Caco-2 (cell line): ENCODE measurements at regions of chr3 and their contacts with region 1.

Region 1: DNA sequence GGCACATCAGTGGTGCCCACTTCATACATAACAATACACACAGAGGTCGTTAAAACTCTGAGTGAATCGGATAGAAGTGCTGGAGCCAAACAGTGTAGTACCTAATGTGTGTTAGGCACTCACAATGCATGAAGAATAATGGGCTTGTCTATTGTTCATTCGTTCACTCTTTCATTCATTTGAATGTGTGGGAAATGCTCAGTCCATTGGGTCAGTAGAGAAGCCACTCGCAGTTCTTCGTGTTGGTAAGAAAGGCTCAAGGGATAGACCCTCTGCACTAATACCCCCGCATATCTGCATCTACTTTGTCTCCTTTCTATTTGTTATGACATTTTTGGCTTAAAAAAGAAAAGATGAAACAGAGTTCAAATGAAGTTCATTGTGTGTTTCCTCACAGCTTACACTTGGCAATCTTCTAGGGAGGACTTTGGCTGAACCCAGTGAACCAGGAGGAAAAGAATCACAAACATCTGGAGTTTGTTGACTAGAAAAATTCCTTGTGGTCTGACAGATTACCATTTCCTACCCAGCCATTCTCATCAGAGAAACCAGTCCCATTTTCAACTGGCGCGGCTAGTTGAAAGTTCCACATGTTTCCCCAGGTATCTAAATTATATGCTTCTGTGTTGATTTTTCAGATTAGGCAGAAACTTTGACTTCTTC is 32.8 kb upstream of the MFSD1 start:
- DNase-seq: peak; percentile 71 to 77
- H3K4me3 ChIP-seq: no peak overlapping the region
- H3K4me3 Mint-ChIP-seq: peak overlapping the region; percentile 52
- H3K27ac Mint-ChIP-seq: peak overlapping the region; percentile 25
- H3K4me1 ChIP-seq: peaks cover 57% of the 10 kb centered on the region
- H3K4me1 Mint-ChIP-seq: peaks cover 56% of the 10 kb centered on the region
- H3K27me3 ChIP-seq: no peaks in the 10 kb centered on the region
- H3K27me3 Mint-ChIP-seq: no peaks in the 10 kb centered on the region
- CTCF ChIP-seq: no peak

Region 2: DNA sequence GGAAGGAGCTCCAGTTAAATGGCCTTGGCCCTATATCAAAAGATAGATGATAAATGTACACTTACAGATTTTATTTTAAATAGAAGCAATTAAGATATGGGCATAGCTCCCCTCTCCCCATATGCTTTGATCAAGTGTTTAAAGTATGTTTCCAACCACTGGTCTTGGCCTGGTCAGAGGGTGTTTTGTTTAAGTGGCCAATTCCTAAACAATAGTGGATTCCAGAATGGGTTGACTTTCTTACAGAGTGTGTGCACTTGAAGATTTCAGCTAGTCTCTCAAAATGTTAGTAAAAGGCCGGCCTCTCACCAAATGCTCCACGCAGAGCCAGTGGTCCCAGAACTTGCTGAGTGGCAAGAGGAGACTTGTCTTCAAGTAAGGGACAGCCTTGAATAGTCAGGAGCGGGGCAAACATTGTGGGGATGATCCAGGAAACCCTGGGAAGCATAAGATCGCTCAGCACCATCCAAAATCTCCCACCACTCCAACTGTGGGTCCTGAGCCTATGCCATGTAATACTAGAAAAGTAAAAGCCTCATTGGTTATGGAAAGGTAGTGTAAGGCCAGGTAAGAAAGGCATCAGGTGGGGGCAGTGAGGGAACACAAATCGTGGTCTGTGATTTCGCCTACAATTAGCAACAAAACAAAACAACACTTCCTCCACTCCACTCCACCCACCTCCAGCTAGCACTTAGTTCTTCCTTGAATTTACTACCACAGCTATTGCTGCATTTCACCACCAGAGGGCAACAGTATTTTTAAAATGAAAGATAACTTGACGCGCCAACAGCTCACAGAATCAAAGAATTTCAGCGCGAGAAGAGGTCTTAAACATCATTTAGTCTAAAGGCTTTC is 41.6 kb before region 1 on chr3:
- CTCF ChIA-PET with region 1: interaction called, 6 read pairs
- POLR2A ChIA-PET with region 1: no interaction called
- intact Hi-C with region 1: loop called (anchors 1 kb)
- DNase-seq: peak; percentile 46 to 63
- H3K4me3 ChIP-seq: no peak overlapping the region
- H3K4me3 Mint-ChIP-seq: no peak overlapping the region
- H3K27ac Mint-ChIP-seq: no peak overlapping the region
- H3K4me1 ChIP-seq: 0 out of 2 replicates have a peak, but pooled peaks cover 3% of the 10 kb centered on the region
- H3K4me1 Mint-ChIP-seq: no peaks in the 10 kb centered on the region
- H3K27me3 ChIP-seq: no peaks in the 10 kb centered on the region
- H3K27me3 Mint-ChIP-seq: no peaks in the 10 kb centered on the region
- CTCF ChIP-seq: peak; percentile 70 to 72

Region 3: GRCh38 chr3:158751362-158751761 is 17.6 kb before region 1 on chr3:
- CTCF ChIA-PET with region 1: no interaction called
- POLR2A ChIA-PET with region 1: no interaction called
- intact Hi-C with region 1: loop called (anchors 1 kb)
- DNase-seq: peak in 1 of 2 experiments; percentile 37
- H3K4me3 ChIP-seq: no peak overlapping the region
- H3K4me3 Mint-ChIP-seq: no peak overlapping the region
- H3K27ac Mint-ChIP-seq: no peak overlapping the region
- H3K4me1 ChIP-seq: 0 out of 2 replicates have a peak, but pooled peaks cover 4% of the 10 kb centered on the region
- H3K4me1 Mint-ChIP-seq: no peaks in the 10 kb centered on the region
- H3K27me3 ChIP-seq: no peaks in the 10 kb centered on the region
- H3K27me3 Mint-ChIP-seq: no peaks in the 10 kb centered on the region
- CTCF ChIP-seq: no peak

Region 4: GRCh38 chr3:158801696-158802408 is 32.8 kb after region 1 on chr3 and contains the start of gene MFSD1:
- CTCF ChIA-PET with region 1: no interaction called
- POLR2A ChIA-PET with region 1: no interaction called
- intact Hi-C with region 1: loop called (anchors 1 kb)
- DNase-seq: peak; percentile 89
- H3K4me3 ChIP-seq: peak within 1 kb of the TSS; percentile 64
- H3K4me3 Mint-ChIP-seq: peak within 1 kb of the TSS; percentile 85
- H3K27ac Mint-ChIP-seq: peak within 1 kb of the TSS; percentile 9
- H3K4me1 ChIP-seq: no peaks in the 10 kb centered on the region
- H3K4me1 Mint-ChIP-seq: peaks cover 7% of the 10 kb centered on the region
- H3K27me3 ChIP-seq: no peaks in the 10 kb centered on the region
- H3K27me3 Mint-ChIP-seq: no peaks in the 10 kb centered on the region
- CTCF ChIP-seq: no peak
- total RNA-seq, gene MFSD1: 15.4 and 16.9 TPM in 2 replicates

Region 5: DNA sequence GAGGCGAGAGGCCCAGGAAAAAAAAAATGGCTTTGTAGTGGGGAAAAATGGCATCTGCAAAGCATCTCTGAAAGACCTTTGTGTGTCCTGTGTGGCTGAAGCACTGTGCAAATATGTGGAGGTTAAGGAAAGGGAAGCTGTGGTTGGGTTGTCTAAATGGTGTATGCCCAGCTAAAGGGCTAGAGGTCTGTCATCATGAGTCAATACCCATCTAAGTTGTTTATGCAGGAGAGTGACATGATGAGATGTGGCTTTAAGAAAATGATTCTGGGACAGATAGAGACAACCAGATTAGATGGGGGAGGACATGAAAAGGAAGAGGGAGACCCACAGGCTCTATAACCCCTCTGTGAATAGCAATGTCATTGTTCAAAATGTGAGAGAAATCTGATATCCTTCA is 313.5 kb after region 1 on chr3:
- CTCF ChIA-PET with region 1: no interaction called
- POLR2A ChIA-PET with region 1: no interaction called
- intact Hi-C with region 1: no loop called
- DNase-seq: no peak
- H3K4me3 ChIP-seq: no peak overlapping the region
- H3K4me3 Mint-ChIP-seq: no peak overlapping the region
- H3K27ac Mint-ChIP-seq: no peak overlapping the region
- H3K4me1 ChIP-seq: no peaks in the 10 kb centered on the region
- H3K4me1 Mint-ChIP-seq: no peaks in the 10 kb centered on the region
- H3K27me3 ChIP-seq: no peaks in the 10 kb centered on the region
- H3K27me3 Mint-ChIP-seq: peaks cover 4% of the 10 kb centered on the region
- CTCF ChIP-seq: no peak